Activated CD4-positive, alpha-beta memory T cell treated with anti-CD3 and anti-CD28 coated beads for 36 hours (primary cell): ENCODE measurements at regions of chr5 and their contacts with region 1.

Region 1: GRCh38 chr5:37837414-37838032 is 2.3 kb downstream of the GDNF start:
- DNase-seq: peak; percentile 86
- H3K4me3 Mint-ChIP-seq: peak overlapping the region; percentile 35
- H3K27ac Mint-ChIP-seq: no peak overlapping the region
- H3K4me1 Mint-ChIP-seq: peaks cover 27% of the 10 kb centered on the region
- H3K27me3 Mint-ChIP-seq: peaks cover 81% of the 10 kb centered on the region

Region 2: GRCh38 chr5:37810311-37810710 is 27.2 kb before region 1 on chr5:
- CTCF ChIA-PET with region 1: no interaction called
- POLR2A ChIA-PET with region 1: no interaction called
- intact Hi-C with region 1: no loop called
- DNase-seq: no peak
- H3K4me3 Mint-ChIP-seq: no peak overlapping the region
- H3K27ac Mint-ChIP-seq: no peak overlapping the region
- H3K4me1 Mint-ChIP-seq: no peaks in the 10 kb centered on the region
- H3K27me3 Mint-ChIP-seq: peaks cover 4% of the 10 kb centered on the region

Region 3: GRCh38 chr5:38029482-38030001 is 192.0 kb after region 1 on chr5:
- CTCF ChIA-PET with region 1: no interaction called
- POLR2A ChIA-PET with region 1: no interaction called
- intact Hi-C with region 1: no loop called
- DNase-seq: no peak
- H3K4me3 Mint-ChIP-seq: no peak overlapping the region
- H3K27ac Mint-ChIP-seq: no peak overlapping the region
- H3K4me1 Mint-ChIP-seq: no peaks in the 10 kb centered on the region
- H3K27me3 Mint-ChIP-seq: no peaks in the 10 kb centered on the region

Region 4: GRCh38 chr5:38193015-38193581 is 355.6 kb after region 1 on chr5:
- CTCF ChIA-PET with region 1: interaction called, 34 read pairs
- POLR2A ChIA-PET with region 1: no interaction called
- intact Hi-C with region 1: loop called (anchors 1 kb)
- DNase-seq: peak; percentile 74
- H3K4me3 Mint-ChIP-seq: no peak overlapping the region
- H3K27ac Mint-ChIP-seq: no peak overlapping the region
- H3K4me1 Mint-ChIP-seq: no peaks in the 10 kb centered on the region
- H3K27me3 Mint-ChIP-seq: peaks cover 19% of the 10 kb centered on the region